Activated naive CD4-positive, alpha-beta T cell treated with anti-CD3 and anti-CD28 coated beads for 36 hours (primary cell): ENCODE measurements at regions of chr2 and their contacts with region 1.

Region 1: GRCh38 chr2:105037572-105038382 is at the start of gene MRPS9:
- DNase-seq: peak; percentile 98
- H3K4me3 Mint-ChIP-seq: peak within 1 kb of the TSS; percentile 98
- H3K27ac Mint-ChIP-seq: peak within 1 kb of the TSS; percentile 88
- H3K4me1 Mint-ChIP-seq: peaks cover 30% of the 10 kb centered on the region
- H3K27me3 Mint-ChIP-seq: no peaks in the 10 kb centered on the region
- total RNA-seq, gene MRPS9: 42.1 to 45.3 TPM

Region 2: GRCh38 chr2:105235388-105236054 is 197.7 kb after region 1 on chr2:
- CTCF ChIA-PET with region 1: interaction called, 3 read pairs
- intact Hi-C with region 1: loop called (anchors 5 kb)
- DNase-seq: peak; percentile 85
- H3K4me3 Mint-ChIP-seq: no peak overlapping the region
- H3K27ac Mint-ChIP-seq: no peak overlapping the region
- H3K4me1 Mint-ChIP-seq: peaks cover 24% of the 10 kb centered on the region
- H3K27me3 Mint-ChIP-seq: peaks cover 7% of the 10 kb centered on the region

Region 3: DNA sequence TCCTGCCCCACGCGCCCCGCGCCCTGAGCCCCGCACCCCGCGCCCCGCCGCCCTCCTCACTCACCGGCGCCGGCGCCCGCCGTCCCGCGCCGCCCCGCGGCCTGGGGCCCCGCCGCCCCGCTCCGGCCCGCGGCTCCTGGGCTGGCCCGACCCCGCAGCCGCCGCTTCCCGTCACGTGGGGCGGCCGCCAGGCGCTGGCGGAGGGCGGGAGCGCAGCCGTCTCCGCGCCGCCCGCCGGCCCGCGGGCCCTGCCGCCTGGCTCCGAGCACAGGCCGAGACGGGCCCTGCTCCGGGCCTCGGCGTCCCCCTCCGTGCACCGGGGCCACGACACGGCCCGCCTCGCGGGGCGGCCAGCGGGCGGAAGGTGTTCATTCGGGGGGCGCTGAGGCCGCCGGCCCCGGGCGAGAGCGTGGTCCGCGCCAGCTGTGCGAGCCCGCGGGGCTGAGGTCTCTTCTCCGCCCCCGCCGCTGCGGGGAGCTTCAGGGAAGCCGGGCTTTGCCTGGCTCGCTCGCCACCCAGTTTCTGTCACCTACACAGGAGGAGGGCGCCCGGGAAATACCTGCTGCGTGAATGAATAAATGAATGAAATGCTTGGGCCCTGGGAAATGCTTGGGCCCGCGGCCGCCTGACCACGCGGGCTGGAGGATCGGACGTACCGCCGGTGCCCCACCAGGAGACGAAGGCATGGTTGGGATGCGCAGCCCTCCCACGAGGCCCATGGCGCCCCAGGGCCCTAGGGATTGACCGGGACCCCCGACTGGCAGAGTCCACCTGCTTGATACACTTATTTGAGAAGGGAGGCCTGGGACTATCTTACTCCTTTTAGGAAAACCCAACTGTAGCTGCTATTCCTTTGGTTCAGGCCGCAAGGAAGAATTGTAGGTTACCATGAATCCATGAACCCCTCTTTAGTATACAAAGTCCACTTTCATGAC is 292.1 kb after region 1 on chr2 and contains the start of gene TGFBRAP1:
- CTCF ChIA-PET with region 1: no interaction called
- intact Hi-C with region 1: loop called (anchors 5 kb)
- DNase-seq: peak; percentile 51
- H3K4me3 Mint-ChIP-seq: peak within 1 kb of the TSS; percentile 87
- H3K27ac Mint-ChIP-seq: peak within 1 kb of the TSS; percentile 93
- H3K4me1 Mint-ChIP-seq: peaks cover 37% of the 10 kb centered on the region
- H3K27me3 Mint-ChIP-seq: no peaks in the 10 kb centered on the region
- total RNA-seq, gene TGFBRAP1: 13.6 to 15.3 TPM

Region 4: DNA sequence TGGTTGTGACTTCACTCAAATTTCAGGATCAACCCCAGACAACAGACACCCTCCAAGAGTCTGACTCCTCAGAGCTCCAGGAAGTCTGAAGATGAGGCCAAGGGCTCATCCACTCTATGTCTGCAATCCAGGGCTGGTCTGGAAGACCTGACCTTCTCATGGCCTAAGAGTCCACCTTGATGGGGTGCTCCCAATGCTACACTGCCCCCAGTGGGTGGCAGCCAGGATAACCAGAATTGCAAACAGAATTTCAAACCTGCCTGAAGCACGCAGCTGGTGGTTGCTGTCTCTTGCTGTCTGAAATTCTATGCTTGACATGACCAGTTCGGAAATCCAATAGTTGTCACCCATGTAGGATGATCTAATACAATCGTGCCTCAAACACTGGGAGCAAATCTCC is 1060.3 kb after region 1 on chr2:
- CTCF ChIA-PET with region 1: no interaction called
- intact Hi-C with region 1: loop called (anchors 10 kb)
- DNase-seq: peak; percentile 53
- H3K4me3 Mint-ChIP-seq: no peak overlapping the region
- H3K27ac Mint-ChIP-seq: no peak overlapping the region
- H3K4me1 Mint-ChIP-seq: peaks cover 40% of the 10 kb centered on the region
- H3K27me3 Mint-ChIP-seq: no peaks in the 10 kb centered on the region